HepG2 (cell line): ENCODE measurements at regions of chr16 and their contacts with region 1.

Region 1: DNA sequence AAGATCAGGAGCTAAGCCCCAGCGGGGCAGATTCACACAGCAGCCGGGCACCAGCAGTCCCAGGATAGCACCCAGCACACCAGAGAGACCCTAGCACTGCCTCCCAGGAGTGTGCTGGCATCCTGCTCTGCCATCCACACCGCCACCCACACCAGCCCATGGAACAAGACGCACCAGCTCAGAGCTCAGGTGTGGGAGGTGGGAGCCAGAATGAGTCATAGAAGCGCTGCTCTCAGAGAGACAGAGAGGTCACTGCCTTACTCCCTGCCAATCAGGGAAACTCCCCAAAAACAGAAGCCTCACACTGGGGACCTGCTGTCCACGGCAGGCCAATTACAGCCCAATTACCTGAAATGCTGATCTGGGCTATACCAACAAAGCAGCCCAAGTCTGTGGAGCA is 64.9 kb downstream of the CDYL2 start:
- DNase-seq: no peak
- ATAC-seq: no peak
- H3K4me3 ChIP-seq: no peak overlapping the region
- H3K27ac ChIP-seq: no peak overlapping the region
- H3K4me1 ChIP-seq: peaks cover 5% of the 10 kb centered on the region; the same call in 1 of the 2 replicates
- H3K27me3 ChIP-seq: no peaks in the 10 kb centered on the region
- CTCF ChIP-seq: no peak
- EP300 ChIP-seq: no peak
- POLR2A ChIP-seq: no peak
- RAD21 ChIP-seq: no peak

Region 2: GRCh38 chr16:79687249-79688130 is 1052.0 kb before region 1 on chr16:
- CTCF ChIA-PET with region 1: no interaction called
- POLR2A ChIA-PET with region 1: no interaction called
- in situ Hi-C with region 1: no loop called
- intact Hi-C with region 1: loop called (anchors 10 kb)
- DNase-seq: no peak
- ATAC-seq: no peak
- H3K4me3 ChIP-seq: no peak overlapping the region
- H3K27ac ChIP-seq: no peak overlapping the region
- H3K4me1 ChIP-seq: no peaks in the 10 kb centered on the region
- H3K27me3 ChIP-seq: no peaks in the 10 kb centered on the region
- CTCF ChIP-seq: no peak
- EP300 ChIP-seq: no peak
- POLR2A ChIP-seq: no peak
- RAD21 ChIP-seq: no peak

Region 3: GRCh38 chr16:80623356-80623755 is 116.2 kb before region 1 on chr16:
- CTCF ChIA-PET with region 1: no interaction called
- POLR2A ChIA-PET with region 1: no interaction called
- in situ Hi-C with region 1: no loop called
- intact Hi-C with region 1: no loop called
- DNase-seq: no peak
- ATAC-seq: no peak
- H3K4me3 ChIP-seq: no peak overlapping the region
- H3K27ac ChIP-seq: no peak overlapping the region
- H3K4me1 ChIP-seq: no peaks in the 10 kb centered on the region
- H3K27me3 ChIP-seq: no peaks in the 10 kb centered on the region
- CTCF ChIP-seq: no peak
- EP300 ChIP-seq: no peak
- POLR2A ChIP-seq: no peak
- RAD21 ChIP-seq: no peak

Region 4: DNA sequence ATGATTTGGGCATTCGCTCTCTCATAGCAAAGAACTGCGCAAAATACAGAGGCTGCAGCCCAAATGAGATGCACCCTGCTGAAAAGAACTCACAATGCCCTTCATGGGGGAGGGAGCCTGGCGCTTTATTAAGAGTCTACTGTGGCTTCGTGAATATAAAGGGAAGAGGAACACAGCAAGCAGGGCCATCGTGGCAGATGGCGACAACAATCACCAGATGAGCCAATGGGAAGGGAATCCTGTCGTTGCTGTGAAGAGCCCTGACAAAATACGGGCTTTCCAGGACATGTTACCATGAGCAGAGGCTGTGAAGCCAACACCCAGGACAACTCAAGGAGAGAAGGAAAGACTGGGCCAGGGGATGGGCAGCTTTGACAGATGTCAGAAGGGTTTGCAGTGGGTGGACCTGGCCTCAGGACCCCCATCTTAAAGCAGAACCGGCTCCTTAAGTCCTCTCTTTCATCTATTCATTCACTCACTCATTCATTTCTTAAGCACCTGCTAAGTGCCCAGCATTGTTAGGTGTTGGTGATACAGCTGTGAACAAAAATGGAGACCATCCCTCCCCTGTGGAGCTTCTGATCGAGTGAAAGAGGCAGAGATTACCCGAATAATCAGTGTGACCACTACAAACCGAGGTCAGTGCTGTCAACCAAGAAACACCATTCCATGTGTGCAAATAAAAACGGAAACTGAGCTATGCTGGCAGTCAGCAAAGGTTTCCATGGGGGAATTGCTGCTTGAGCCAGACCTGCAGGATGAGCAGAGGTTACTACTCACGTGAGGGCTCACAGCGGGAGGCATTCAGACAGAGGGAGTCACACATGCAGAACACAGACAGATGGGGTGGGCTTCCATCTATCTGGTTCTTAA is 72.9 kb before region 1 on chr16:
- CTCF ChIA-PET with region 1: no interaction called
- POLR2A ChIA-PET with region 1: no interaction called
- in situ Hi-C with region 1: no loop called
- intact Hi-C with region 1: no loop called
- DNase-seq: no peak
- ATAC-seq: no peak
- H3K4me3 ChIP-seq: no peak overlapping the region
- H3K27ac ChIP-seq: no peak overlapping the region
- H3K4me1 ChIP-seq: no peaks in the 10 kb centered on the region
- H3K27me3 ChIP-seq: peaks cover 0 to 14% of the 10 kb centered on the region in 2 experiments; a peak in 2 of 5 replicates
- CTCF ChIP-seq: no peak
- EP300 ChIP-seq: no peak
- POLR2A ChIP-seq: no peak
- RAD21 ChIP-seq: no peak